OCI-LY7 (cell line): ENCODE measurements at regions of chr2 and their contacts with region 1.

Region 1: DNA sequence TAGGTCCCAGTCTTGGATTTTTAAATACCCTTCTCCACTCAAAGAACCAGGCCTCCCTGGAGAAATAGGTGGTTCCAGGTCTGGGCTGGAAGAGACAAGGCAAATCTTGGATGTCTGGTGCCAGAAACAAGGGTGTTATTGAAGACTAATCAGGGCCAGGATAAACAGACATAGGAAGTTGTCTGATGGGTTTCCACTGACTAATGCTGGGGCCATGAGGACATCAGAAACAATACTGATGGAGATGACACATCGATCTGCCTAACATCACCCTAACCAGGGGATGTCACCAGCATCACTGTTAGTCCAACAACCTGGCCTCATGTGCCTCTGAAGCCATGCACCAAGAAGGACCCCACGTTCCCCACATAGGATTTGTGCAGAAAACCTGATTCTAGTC is 42.5 kb upstream of the GLI2 start:
- DNase-seq: no peak
- H3K4me3 ChIP-seq: no peak overlapping the region
- H3K27ac ChIP-seq: no peak overlapping the region
- H3K4me1 ChIP-seq: no peaks in the 10 kb centered on the region
- CTCF ChIP-seq: no peak

Region 2: GRCh38 chr2:120958623-120959366 is 265.7 kb after region 1 on chr2:
- CTCF ChIA-PET with region 1: no interaction called
- POLR2A ChIA-PET with region 1: no interaction called
- intact Hi-C with region 1: loop called (anchors 10 kb)
- DNase-seq: peak; percentile 16
- H3K4me3 ChIP-seq: no peak overlapping the region
- H3K27ac ChIP-seq: no peak overlapping the region
- H3K4me1 ChIP-seq: peaks cover 2% of the 10 kb centered on the region
- CTCF ChIP-seq: peak; percentile 58

Region 3: DNA sequence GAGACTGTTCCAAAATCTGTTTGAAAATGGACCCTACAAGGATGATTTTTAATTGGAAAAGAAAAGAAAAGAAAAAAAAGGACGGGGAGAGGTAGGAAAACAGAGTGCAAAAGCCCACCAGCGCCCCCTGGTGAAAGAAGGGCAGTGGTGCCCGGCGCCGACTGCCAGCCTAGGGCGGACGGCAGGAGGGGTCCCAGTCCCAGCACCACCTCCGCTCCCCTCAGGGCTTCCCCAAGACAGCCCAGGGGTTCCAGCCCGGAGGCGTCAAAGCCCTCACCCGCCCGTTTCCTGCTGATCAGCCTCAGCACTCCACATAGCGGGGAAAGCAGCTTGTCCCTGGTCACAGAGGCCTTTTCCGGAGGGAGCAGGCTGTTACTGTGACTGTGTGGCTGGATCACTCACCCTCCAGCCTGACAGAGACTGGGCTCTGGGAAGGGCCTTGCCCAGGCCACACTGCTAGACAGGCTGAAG is 377.9 kb after region 1 on chr2:
- CTCF ChIA-PET with region 1: no interaction called
- POLR2A ChIA-PET with region 1: no interaction called
- intact Hi-C with region 1: loop called (anchors 1 kb)
- DNase-seq: peak; percentile 51
- H3K4me3 ChIP-seq: no peak overlapping the region
- H3K27ac ChIP-seq: no peak overlapping the region
- H3K4me1 ChIP-seq: no peaks in the 10 kb centered on the region
- CTCF ChIP-seq: peak; percentile 87

Region 4: GRCh38 chr2:121104721-121105141 is 411.6 kb after region 1 on chr2:
- CTCF ChIA-PET with region 1: no interaction called
- POLR2A ChIA-PET with region 1: no interaction called
- intact Hi-C with region 1: no loop called
- DNase-seq: no peak
- H3K4me3 ChIP-seq: no peak overlapping the region
- H3K27ac ChIP-seq: no peak overlapping the region
- H3K4me1 ChIP-seq: no peaks in the 10 kb centered on the region
- CTCF ChIP-seq: no peak